Posterior vena cava (tissue), 2 donors: ENCODE measurements at regions of chr1 and their contacts with region 1.

Region 1: DNA sequence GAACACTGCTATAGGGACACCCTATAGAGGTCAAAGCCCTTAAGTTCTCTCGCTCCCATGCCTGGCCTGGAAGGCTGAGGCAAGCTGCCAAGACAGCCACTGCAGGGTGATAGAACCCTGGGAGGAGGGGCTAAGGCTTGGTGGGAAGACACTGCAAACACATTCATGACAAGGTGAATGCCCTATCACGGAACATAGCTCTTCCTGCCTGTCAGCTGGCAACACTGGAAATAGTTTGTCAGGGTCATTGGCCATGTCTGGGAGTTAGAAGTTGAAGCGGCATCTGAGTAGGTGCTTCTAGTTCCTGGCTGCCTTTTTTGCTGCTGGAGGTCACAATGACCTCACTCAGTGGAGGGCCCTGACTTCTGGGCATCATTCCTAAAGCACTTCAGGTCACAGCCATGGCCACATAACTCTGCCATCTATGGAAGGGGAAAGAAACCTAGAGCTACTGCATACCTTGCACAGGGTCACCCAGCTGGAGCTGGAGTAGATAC is 4.2 kb downstream of the FABP3 start:
- DNase-seq: no peak

Region 2: GRCh38 chr1:31248293-31248692 is 120.4 kb before region 1 on chr1:
- intact Hi-C with region 1: no loop called
- DNase-seq: no peak

Region 3: DNA sequence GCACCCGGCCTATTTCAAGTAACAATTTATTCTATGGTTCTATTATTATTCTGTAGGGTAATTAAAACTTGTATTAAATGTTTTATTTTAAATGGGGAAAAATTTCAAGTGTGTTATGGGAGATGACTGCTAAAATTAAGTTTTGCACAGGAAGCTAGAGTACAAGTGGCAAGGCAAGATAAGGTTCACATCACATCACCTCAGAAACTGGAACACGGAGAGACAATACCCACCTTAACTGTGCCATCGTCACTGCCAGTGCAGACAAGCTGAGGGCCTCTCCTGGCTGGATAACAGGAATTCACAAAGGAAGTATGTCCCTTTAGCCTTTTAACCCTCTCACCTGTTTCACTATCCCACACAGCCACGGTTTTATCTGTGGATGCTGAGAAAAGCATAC is 79.6 kb before region 1 on chr1:
- intact Hi-C with region 1: loop called in 1 of 2 experiments (anchors 10 kb)
- DNase-seq: no peak

Region 4: GRCh38 chr1:31310198-31310597 is 58.5 kb before region 1 on chr1:
- intact Hi-C with region 1: no loop called
- DNase-seq: no peak